H1 (cell line): ENCODE measurements at regions of chr9 and their contacts with region 1.

Region 1: DNA sequence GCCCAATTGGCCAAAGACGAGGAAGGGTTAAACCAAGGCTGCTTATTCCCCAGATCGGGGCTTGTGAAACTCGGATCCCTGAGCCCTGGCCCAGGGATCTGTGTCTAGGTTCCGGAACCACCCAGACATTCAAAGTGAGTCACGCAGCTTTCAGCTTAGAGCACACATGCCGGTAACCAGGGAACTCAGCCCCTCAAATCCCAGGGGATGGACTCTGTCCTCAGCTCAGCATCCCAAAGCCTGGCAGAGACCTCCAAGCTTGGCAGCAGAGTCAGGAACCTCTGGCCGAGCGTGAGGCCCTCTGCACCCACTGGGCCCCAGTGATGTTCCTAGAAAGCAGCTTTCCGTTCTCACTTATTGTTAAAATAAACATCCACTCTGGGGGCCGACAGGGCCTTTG is 5.1 kb downstream of the PNPLA7 start:
- DNase-seq: no peak
- H3K4me3 ChIP-seq: no peak overlapping the region
- H3K27ac ChIP-seq: no peak overlapping the region
- H3K4me1 ChIP-seq: peaks cover 0 to 3% (median 0%) of the 10 kb centered on the region in 4 experiments; a peak in 1 of 7 replicates
- H3K27me3 ChIP-seq: no peaks in the 10 kb centered on the region
- CTCF ChIP-seq: no peak
- EP300 ChIP-seq: no peak
- POLR2A ChIP-seq: no peak
- RAD21 ChIP-seq: no peak

Region 2: DNA sequence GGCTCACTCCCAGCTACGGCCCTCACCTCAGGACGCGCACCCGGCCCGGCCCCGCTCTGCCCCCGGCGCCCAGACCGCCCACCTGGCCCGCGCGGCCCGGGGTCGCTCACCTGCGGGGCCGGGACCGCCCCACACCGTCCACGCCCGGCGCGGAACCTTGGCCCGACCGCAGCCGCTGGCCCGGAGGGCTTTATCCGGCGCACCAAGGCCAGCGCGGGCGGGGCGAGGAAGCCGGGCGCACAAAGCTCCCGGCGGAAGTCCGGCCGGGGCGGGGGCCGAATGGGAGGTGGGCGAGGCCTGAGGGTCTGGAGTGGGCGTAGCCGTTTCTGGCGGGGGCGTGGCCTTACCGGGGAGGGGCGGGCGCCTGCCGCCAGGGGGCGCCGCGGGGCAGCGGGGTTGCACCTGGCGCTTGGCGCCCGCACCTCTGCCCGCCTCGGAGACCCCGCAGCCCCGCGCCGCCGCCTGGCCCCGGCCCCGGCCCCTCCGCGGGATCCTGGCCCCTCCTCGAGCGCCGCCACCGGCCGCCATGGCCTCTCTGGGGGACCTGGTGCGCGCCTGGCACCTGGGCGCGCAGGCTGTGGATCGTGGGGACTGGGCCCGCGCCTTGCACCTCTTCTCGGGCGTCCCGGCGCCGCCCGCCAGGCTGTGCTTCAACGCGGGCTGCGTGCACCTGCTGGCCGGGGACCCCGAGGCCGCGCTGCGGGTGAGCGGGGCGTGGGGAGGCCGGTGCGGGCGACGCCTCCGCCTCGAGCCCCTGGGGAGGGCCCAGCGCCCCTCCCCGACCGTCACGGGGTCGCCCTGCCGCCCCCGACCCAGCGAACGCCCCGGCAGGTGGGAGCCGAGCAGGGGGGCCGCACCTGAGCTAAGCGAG is 121.9 kb before region 1 on chr9 and contains the starts of genes EXD3 and NOXA1:
- CTCF ChIA-PET with region 1: no interaction called
- POLR2A ChIA-PET with region 1: no interaction called
- DNase-seq: peak; percentile 68 to 99
- H3K4me3 ChIP-seq: peak within 1 kb of the TSS; percentile 70 to 84 (median 80)
- H3K27ac ChIP-seq: no peak within 1 kb of the TSS
- H3K4me1 ChIP-seq: peaks cover 0 to 2% (median 0%) of the 10 kb centered on the region in 4 experiments; a peak in 1 of 7 replicates
- H3K27me3 ChIP-seq: peaks cover 0 to 13% (median 2%) of the 10 kb centered on the region in 4 experiments; a peak in 4 of 7 replicates
- CTCF ChIP-seq: peak in 2 of 3 experiments; percentile 64 to 70; a peak in 3 of 4 replicates
- EP300 ChIP-seq: peak in 1 of 2 experiments; percentile 65; a peak in 1 of 3 replicates
- POLR2A ChIP-seq: no peak
- RAD21 ChIP-seq: peak; percentile 27 to 61; a peak in 3 of 4 replicates
- total RNA-seq, gene EXD3: 7.0 and 7.2 TPM in 2 replicates
- total RNA-seq, gene NOXA1: 0.34 and 0.55 TPM in 2 replicates

Region 3: DNA sequence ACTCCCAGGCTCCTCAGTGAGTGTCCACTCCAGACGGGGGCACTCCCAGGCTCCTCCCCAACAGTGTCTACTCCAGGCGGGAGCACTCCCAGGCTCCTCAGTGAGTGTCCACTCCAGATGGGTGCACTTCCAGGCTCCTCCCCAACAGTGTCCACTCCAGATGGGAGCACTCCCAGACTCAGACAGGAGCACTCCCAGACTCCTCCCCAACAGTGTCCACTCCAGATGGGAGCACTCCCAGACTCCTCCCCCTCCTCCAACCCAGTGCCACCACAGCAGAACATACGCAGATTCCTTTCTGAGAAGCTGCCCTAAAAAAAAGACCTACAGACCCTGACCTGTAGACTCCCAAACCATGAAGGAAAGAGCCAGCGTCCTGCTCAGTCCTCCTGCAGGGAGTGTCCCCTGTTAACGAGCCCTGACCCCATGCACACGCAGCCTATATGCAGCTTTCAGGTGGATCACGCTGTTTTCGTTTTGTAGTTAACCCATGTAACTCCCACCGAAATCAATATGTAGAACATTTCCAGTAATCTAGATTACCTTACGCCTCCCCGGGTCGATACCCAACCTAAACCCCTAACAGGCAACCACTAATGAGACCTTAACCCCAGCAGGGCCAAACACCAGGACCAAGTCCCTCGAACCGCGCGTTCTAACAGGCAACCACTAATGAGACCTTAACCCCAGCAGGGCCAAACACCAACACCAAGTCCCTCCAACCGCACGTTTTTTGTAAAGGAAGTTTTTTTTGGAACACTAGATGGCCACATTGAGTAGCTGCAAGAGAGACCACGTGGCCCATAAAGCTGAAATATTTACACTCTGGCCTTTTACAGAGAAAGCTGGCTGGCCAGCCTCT is 10.6 kb before region 1 on chr9:
- CTCF ChIA-PET with region 1: interaction called, 13 read pairs
- POLR2A ChIA-PET with region 1: interaction called, 3 read pairs
- DNase-seq: no peak
- H3K4me3 ChIP-seq: no peak overlapping the region
- H3K27ac ChIP-seq: no peak overlapping the region
- H3K4me1 ChIP-seq: no peaks in the 10 kb centered on the region; a peak in 2 of 7 replicates
- H3K27me3 ChIP-seq: no peaks in the 10 kb centered on the region
- CTCF ChIP-seq: peak in 2 of 3 experiments; percentile 39 to 62; a peak in 2 of 4 replicates
- EP300 ChIP-seq: no peak
- POLR2A ChIP-seq: no peak
- RAD21 ChIP-seq: peak in 1 of 2 experiments; percentile 34; a peak in 2 of 4 replicates